Activated CD4-positive, alpha-beta T cell treated with anti-CD3 and anti-CD28 coated beads, Interleukin-2, amount 10 ng/mL, durations not matched to agents 24 days and 14 days (primary cell): ENCODE measurements at regions of chr1 and their contacts with region 1.

Region 1: GRCh38 chr1:23098463-23099170 is 70.0 kb downstream of the LUZP1 start:
- DNase-seq: peak; percentile 88
- H3K4me3 Mint-ChIP-seq: peak overlapping the region; percentile 26
- H3K27ac Mint-ChIP-seq: no peak overlapping the region
- H3K4me1 Mint-ChIP-seq: peaks cover 41% of the 10 kb centered on the region
- H3K27me3 Mint-ChIP-seq: no peaks in the 10 kb centered on the region

Region 2: GRCh38 chr1:22976461-22977243 is 122.0 kb before region 1 on chr1:
- intact Hi-C with region 1: loop called (anchors 5 kb)
- DNase-seq: peak; percentile 86
- H3K4me3 Mint-ChIP-seq: no peak overlapping the region
- H3K27ac Mint-ChIP-seq: no peak overlapping the region
- H3K4me1 Mint-ChIP-seq: peaks cover 4% of the 10 kb centered on the region
- H3K27me3 Mint-ChIP-seq: peaks cover 23% of the 10 kb centered on the region